ENCODE measurements at regions of chr1 and their contacts with region 1.

Region 1: GRCh38 chr1:85894651-85895050 is 186.4 kb upstream of the ZNHIT6 start:
- DNase-seq: peak; percentile 18
- ATAC-seq: peak; percentile 72
- H3K4me3 ChIP-seq: no peak overlapping the region
- H3K27ac ChIP-seq: no peak overlapping the region
- H3K4me1 ChIP-seq: peaks cover 3 to 14% of the 10 kb centered on the region in 2 experiments; a peak in 2 of 4 replicates
- H3K27me3 ChIP-seq: no peaks in the 10 kb centered on the region
- CTCF ChIP-seq: peak; percentile 32 to 54 (median 44); a peak in 4 of 6 replicates
- POLR2A ChIP-seq: no peak
- RAD21 ChIP-seq: peak; percentile 43

Region 2: GRCh38 chr1:85692730-85693314 is 201.8 kb before region 1 on chr1:
- CTCF ChIA-PET with region 1: no interaction called
- POLR2A ChIA-PET with region 1: no interaction called
- RAD21 ChIA-PET with region 1: no interaction called
- intact Hi-C with region 1: no loop called
- DNase-seq: peak; percentile 6
- ATAC-seq: no peak
- H3K4me3 ChIP-seq: no peak overlapping the region
- H3K27ac ChIP-seq: no peak overlapping the region
- H3K4me1 ChIP-seq: no peaks in the 10 kb centered on the region
- H3K27me3 ChIP-seq: no peaks in the 10 kb centered on the region
- CTCF ChIP-seq: peak; percentile 34 to 81 (median 67); a peak in 4 of 6 replicates
- POLR2A ChIP-seq: no peak
- RAD21 ChIP-seq: peak; percentile 72

Region 3: GRCh38 chr1:86362807-86363206 is 468.2 kb after region 1 on chr1:
- CTCF ChIA-PET with region 1: no interaction called
- POLR2A ChIA-PET with region 1: no interaction called
- RAD21 ChIA-PET with region 1: no interaction called
- intact Hi-C with region 1: loop called (anchors 10 kb)
- DNase-seq: no peak
- ATAC-seq: peak; percentile 61
- H3K4me3 ChIP-seq: no peak overlapping the region
- H3K27ac ChIP-seq: no peak overlapping the region
- H3K4me1 ChIP-seq: no peaks in the 10 kb centered on the region
- H3K27me3 ChIP-seq: no peaks in the 10 kb centered on the region
- CTCF ChIP-seq: 0 out of 6 replicates have a peak, but pooled peaks of 1 of the 3 experiments have one; percentile 14
- POLR2A ChIP-seq: no peak
- RAD21 ChIP-seq: no peak

Region 4: GRCh38 chr1:87093286-87093685 is 1198.6 kb after region 1 on chr1:
- CTCF ChIA-PET with region 1: no interaction called
- POLR2A ChIA-PET with region 1: no interaction called
- RAD21 ChIA-PET with region 1: no interaction called
- intact Hi-C with region 1: no loop called
- DNase-seq: no peak
- ATAC-seq: no peak
- H3K4me3 ChIP-seq: no peak overlapping the region
- H3K27ac ChIP-seq: no peak overlapping the region
- H3K4me1 ChIP-seq: no peaks in the 10 kb centered on the region
- H3K27me3 ChIP-seq: no peaks in the 10 kb centered on the region
- CTCF ChIP-seq: no peak
- POLR2A ChIP-seq: no peak
- RAD21 ChIP-seq: no peak